ENCODE measurements at regions of chr6 and their contacts with region 1.

Region 1: DNA sequence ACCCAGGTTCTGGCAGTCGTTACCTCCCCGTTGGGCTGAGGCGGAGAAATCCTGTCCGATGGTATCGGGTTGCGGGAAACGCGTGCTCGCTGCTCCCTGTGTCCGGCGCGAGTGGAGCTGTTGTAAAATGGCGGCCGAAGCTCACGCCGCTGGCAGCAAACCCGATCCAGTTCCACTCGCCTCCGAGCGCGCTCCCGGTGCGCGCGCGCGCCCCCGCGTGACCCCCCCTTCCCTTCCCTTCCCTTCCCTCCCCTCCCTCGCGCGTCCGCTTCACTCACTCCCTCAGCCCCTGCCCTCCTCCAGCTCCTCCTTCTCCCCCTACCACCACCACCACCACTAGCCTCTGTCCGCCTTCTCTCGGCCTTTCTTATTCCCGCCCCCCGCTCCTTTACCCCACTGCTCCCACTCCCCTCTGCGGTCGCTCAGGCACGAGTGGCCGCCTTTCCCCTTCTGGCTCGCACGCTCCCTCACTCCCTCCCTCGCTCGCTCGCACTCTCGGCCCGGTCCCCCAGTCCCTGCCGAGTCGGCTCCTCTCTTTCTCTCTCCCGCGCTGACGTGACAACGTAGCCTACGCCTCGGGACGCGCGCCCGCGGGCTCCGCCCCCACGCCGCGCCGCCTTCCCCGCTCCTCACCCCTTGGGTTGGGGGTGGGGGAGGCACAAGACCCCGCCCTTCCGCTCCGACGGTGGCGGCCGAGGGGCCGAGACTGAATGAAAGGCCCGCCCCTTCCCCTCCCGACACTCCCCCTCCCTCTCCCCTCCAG is at the start of gene SYNCRIP:
- DNase-seq: peak; percentile 100
- ATAC-seq: peak; percentile 88 to 94 (median 88)
- H3K4me3 ChIP-seq: peak within 1 kb of the TSS; percentile 69 to 98 (median 83)
- H3K27ac ChIP-seq: peak within 1 kb of the TSS; percentile 96 to 99 (median 98)
- H3K4me1 ChIP-seq: peaks cover 0 to 30% (median 5%) of the 10 kb centered on the region in 4 donors
- H3K27me3 ChIP-seq: no peaks in the 10 kb centered on the region
- CTCF ChIP-seq: no peak
- POLR2A ChIP-seq: peak; percentile 93
- total RNA-seq, gene SYNCRIP: 27.8 to 47.3 (median 39.4) TPM

Region 2: GRCh38 chr6:85678602-85679444 is 35.9 kb after region 1 on chr6:
- intact Hi-C with region 1: loop called in 1 of 2 experiments (anchors 5 kb)
- DNase-seq: peak; percentile 97 to 98 (median 98)
- ATAC-seq: peak; percentile 94 to 99 (median 96)
- H3K4me3 ChIP-seq: peak overlapping the region; percentile 75 to 85 (median 81)
- H3K27ac ChIP-seq: peak overlapping the region; percentile 77 to 88 (median 84)
- H3K4me1 ChIP-seq: peaks cover 0 to 23% (median 4%) of the 10 kb centered on the region in 4 donors
- H3K27me3 ChIP-seq: no peaks in the 10 kb centered on the region
- CTCF ChIP-seq: no peak
- POLR2A ChIP-seq: peak; percentile 100

Region 3: DNA sequence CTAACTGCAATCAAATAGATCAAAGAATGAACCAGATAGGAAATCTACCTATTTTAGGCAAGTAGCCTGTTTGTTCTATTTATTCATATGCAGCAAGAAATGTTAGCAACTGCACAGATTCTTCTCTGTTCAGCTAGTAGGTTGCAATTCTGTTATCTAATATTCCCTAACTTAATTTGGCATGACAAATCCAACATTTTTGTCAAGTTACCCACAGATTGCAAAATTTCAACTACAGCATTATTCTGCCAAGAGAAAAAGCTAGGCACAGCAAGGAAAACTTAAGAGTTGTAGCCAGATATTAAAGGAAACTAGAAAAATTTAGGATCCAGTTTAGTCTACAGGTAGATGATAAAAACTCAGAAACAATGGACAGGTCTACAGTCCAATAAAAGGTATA is 104.1 kb after region 1 on chr6:
- intact Hi-C with region 1: no loop called
- DNase-seq: no peak
- ATAC-seq: no peak
- H3K4me3 ChIP-seq: no peak overlapping the region
- H3K27ac ChIP-seq: no peak overlapping the region
- H3K4me1 ChIP-seq: no peaks in the 10 kb centered on the region
- H3K27me3 ChIP-seq: no peaks in the 10 kb centered on the region
- CTCF ChIP-seq: no peak
- POLR2A ChIP-seq: no peak

Measured in right lobe of liver (tissue), 6 donors.